Heart left ventricle (tissue), 16 donors: ENCODE measurements at regions of chr11 and their contacts with region 1.

Region 1: GRCh38 chr11:63032457-63032856 is 16.8 kb upstream of the SLC22A8 start:
- DNase-seq: no peak
- ATAC-seq: no peak
- H3K4me3 ChIP-seq: no peak overlapping the region
- H3K27ac ChIP-seq: no peak overlapping the region
- H3K4me1 ChIP-seq: peaks cover 0 to 4% (median 0%) of the 10 kb centered on the region in 12 donors
- H3K27me3 ChIP-seq: peaks cover 0 to 13% (median 0%) of the 10 kb centered on the region in 9 donors
- CTCF ChIP-seq: no peak
- POLR2A ChIP-seq: no peak

Region 2: GRCh38 chr11:62880803-62881578 is 151.5 kb before region 1 on chr11 and contains the start of gene SLC3A2:
- intact Hi-C with region 1: no loop called
- DNase-seq: peak; percentile 88 to 93 (median 90)
- ATAC-seq: peak; percentile 90 to 94 (median 92)
- H3K4me3 ChIP-seq: peak within 1 kb of the TSS; percentile 80 to 100 (median 96)
- H3K27ac ChIP-seq: peak within 1 kb of the TSS; percentile 93 to 100 (median 99)
- H3K4me1 ChIP-seq: peaks cover 13 to 53% (median 40%) of the 10 kb centered on the region in 12 donors
- H3K27me3 ChIP-seq: no peaks in the 10 kb centered on the region
- CTCF ChIP-seq: peak; percentile 49 to 93 (median 80)
- POLR2A ChIP-seq: peak; percentile 95 to 98
- total RNA-seq, gene SLC3A2: 26.6 to 76.0 (median 59.1) TPM

Region 3: GRCh38 chr11:63142459-63142858 is 110.0 kb after region 1 on chr11:
- intact Hi-C with region 1: no loop called
- DNase-seq: no peak
- ATAC-seq: no peak
- H3K4me3 ChIP-seq: no peak overlapping the region
- H3K27ac ChIP-seq: no peak overlapping the region
- H3K4me1 ChIP-seq: peaks cover 0 to 6% (median 0%) of the 10 kb centered on the region in 12 donors
- H3K27me3 ChIP-seq: no peaks in the 10 kb centered on the region
- CTCF ChIP-seq: no peak
- POLR2A ChIP-seq: no peak

Region 4: DNA sequence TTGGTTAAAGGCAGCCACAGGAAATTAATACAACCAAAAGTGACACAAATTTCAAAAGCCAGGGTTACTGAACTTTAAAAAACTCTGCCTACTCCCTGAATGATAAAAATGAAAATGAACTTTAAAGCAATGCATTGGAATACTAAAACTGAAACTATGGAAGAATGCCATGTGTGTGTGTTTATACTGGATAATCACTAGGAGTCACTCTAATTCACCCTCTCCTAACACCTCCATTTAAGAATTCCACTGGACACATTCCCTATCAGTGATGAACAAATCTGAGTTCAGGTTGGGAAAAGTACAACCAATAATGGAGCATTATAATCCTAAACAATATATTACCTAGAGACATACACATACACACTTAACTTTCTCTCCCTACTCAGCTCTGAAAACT is 609.3 kb after region 1 on chr11:
- intact Hi-C with region 1: loop called in 4 of 10 experiments (anchors 5 to 10 kb)
- DNase-seq: no peak
- ATAC-seq: peak in 1 of 4 donors; percentile 29
- H3K4me3 ChIP-seq: no peak overlapping the region
- H3K27ac ChIP-seq: no peak overlapping the region
- H3K4me1 ChIP-seq: peaks cover 0 to 8% (median 0%) of the 10 kb centered on the region in 12 donors
- H3K27me3 ChIP-seq: no peaks in the 10 kb centered on the region
- CTCF ChIP-seq: peak in 3 of 12 donors; percentile 16 to 28 (median 20)
- POLR2A ChIP-seq: no peak

Region 5: DNA sequence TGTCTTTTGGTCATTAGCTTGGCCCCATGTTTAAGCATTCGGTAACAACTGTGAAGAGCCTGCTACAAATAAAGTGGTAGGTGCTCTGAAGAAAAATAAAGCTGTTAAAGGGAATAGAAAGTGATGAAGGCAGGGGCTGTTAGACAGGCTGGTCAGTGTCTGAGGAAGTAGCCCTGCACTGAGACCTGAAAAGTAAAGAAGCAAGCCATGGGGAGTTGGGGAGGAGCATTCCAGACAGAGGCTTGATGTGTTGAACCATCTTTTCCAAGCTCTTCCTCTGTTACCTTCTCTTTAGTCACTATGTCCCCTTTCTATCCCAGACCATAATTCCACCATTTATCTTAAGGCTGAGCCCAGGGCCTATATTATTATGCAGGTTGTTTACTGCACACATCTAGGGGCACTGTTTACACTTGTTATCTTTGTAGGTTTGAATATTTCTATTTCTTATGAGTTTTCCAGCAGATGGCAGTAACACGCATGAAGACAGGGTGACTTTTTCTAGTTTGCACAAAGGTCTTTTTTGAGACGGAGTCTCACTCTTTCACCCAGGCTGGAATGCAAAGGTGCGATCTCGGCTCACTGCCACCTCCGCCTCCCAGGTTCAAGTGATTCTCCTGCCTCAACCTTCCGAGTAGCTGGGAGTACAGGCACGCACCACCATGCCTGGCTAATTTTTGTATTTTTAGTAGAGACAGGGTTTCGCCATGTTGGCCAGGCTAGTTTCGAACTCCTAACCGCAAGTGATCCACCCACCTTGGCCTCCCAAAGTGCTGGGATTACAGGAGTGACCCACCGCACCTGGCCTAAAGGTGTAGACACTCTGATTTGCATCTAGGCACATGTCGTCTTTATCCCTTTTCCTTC is 713.1 kb after region 1 on chr11:
- intact Hi-C with region 1: loop called in 1 of 10 experiments (anchors 10 kb)
- DNase-seq: no peak
- ATAC-seq: no peak
- H3K4me3 ChIP-seq: no peak overlapping the region
- H3K27ac ChIP-seq: no peak overlapping the region
- H3K4me1 ChIP-seq: peaks cover 0 to 3% (median 0%) of the 10 kb centered on the region in 12 donors
- H3K27me3 ChIP-seq: no peaks in the 10 kb centered on the region
- CTCF ChIP-seq: peak in 2 of 12 donors; percentile 31 to 35
- POLR2A ChIP-seq: no peak